ENCODE measurements at regions of chr3 and their contacts with region 1.

Region 1: DNA sequence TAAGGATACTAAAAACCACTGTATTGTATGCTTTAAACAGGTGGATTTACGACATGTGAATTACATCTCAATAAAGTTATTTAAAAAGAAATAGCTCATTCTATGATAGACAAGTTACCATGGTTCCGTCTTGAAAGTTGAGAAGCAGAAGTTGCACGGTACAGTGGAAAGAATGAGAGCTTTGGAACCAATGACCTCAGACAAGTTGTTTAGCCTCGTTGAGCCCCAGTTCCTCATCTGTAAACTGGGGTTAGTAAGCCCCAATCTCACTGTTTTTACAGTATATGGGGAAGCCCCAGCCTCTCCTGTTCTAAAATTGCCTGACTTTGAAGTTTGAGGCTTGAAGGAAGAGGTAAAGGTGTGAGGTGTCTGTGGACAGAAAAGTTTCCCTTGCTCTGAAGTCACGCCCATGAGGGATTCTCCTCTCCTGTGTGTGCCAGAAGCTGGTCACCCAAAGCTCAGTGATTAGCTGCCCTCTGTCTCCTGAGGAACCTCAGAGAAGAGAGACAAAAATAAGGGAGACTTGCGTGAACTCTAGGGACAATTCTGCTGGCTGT is 10.0 kb downstream of the CRYGS start:
- DNase-seq: peak; percentile 14
- H3K4me3 Mint-ChIP-seq: peak overlapping the region; percentile 57
- H3K27ac Mint-ChIP-seq: peak overlapping the region; percentile 90
- H3K4me1 Mint-ChIP-seq: peaks cover 42% of the 10 kb centered on the region
- H3K27me3 Mint-ChIP-seq: no peaks in the 10 kb centered on the region

Region 2: GRCh38 chr3:186259612-186260383 is 274.4 kb before region 1 on chr3:
- intact Hi-C with region 1: loop called (anchors 1 kb)
- DNase-seq: peak; percentile 27
- H3K4me3 Mint-ChIP-seq: peak overlapping the region; percentile 3
- H3K27ac Mint-ChIP-seq: peak overlapping the region; percentile 40
- H3K4me1 Mint-ChIP-seq: peaks cover 20% of the 10 kb centered on the region
- H3K27me3 Mint-ChIP-seq: peaks cover 5% of the 10 kb centered on the region

Region 3: DNA sequence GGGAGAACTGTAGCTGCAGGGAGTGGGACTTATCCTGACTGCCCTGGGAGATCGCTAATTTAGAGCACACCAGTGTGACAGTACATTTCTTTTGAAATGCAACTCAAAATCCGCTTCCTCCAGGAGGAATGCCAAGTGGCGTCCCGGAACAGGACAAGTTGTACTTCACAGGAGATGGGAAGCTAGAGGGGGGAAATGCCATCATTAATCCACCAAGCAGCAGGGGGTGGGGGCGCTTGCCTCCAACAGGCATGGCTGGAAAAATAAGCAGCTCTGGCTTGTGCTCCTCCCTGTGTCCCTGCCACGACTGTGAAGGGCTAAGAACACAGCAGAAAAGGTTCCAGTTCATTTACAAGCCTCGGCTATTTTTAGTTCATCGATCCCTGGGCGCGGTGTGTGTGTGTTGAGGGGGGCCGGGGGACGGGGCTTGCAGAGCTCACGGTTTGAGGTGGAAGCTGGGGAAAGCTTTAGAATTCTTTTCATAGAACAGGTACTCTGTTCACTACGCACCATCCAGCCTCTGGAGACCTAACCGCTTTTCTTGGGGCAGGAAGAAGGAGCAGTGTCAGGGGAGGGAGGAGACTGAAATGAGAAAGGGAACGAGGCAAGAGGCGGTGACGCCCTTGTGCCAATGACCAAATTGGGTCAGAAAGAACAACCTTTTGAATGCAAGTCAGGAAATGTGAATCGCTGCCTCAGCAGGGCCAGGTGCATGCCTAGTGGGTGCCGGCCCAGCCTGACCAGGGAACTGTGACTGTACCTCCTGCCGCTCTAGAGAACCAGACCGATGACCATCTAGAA is 120.4 kb before region 1 on chr3:
- intact Hi-C with region 1: loop called (anchors 10 kb)
- DNase-seq: no peak
- H3K4me3 Mint-ChIP-seq: peak overlapping the region; percentile 35
- H3K27ac Mint-ChIP-seq: no peak overlapping the region
- H3K4me1 Mint-ChIP-seq: peaks cover 12% of the 10 kb centered on the region
- H3K27me3 Mint-ChIP-seq: peaks cover 15% of the 10 kb centered on the region

Region 4: DNA sequence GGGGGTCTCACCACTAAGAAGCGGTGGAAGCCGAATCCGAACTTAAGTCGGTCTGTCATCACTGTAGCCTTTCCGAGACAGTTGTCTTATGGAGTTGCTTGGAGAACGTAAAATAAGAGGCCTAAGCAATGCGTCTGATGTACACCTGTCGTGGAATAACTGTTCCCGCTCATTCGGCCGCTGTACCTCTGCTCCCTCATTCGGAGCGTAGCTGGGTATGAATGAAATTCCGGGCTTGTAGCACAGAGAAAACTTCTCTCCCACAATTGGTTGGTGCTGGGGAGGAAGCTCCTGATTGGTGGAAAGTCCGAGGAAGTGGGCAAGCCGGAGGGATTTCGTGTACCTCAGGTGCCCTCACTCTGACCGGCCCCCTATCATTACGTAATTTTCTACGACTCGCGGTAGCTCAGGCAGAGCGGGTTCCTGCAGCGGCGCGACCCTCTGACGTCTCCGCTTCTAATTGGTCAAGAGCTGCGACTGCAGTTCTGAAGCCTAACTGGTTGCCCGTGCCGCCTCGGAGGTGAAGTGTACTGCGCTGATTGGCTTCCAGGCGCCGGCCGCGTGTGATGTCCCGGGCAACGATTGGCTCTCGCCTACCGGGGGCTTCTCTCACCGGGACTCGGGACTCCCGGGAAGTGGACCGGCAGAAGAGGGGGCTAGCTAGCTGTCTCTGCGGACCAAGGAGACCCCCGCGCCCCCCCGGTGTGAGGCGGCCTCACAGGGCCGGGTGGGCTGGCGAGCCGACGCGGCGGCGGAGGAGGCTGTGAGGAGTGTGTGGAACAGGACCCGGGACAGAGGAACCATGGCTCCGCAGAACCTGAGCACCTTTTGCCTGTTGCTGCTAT is 36.1 kb after region 1 on chr3 and contains the start of gene DNAJB11:
- intact Hi-C with region 1: loop called (anchors 2 kb)
- DNase-seq: peak; percentile 98
- H3K4me3 Mint-ChIP-seq: peak within 1 kb of the TSS; percentile 89
- H3K27ac Mint-ChIP-seq: peak within 1 kb of the TSS; percentile 98
- H3K4me1 Mint-ChIP-seq: peaks cover 42% of the 10 kb centered on the region
- H3K27me3 Mint-ChIP-seq: no peaks in the 10 kb centered on the region
- total RNA-seq, gene DNAJB11: 66.3 and 72.8 TPM in 2 replicates

Region 5: GRCh38 chr3:186617038-186617946 is 83.1 kb after region 1 on chr3:
- intact Hi-C with region 1: loop called (anchors 10 kb)
- DNase-seq: peak; percentile 77
- H3K4me3 Mint-ChIP-seq: peak overlapping the region; percentile 61
- H3K27ac Mint-ChIP-seq: peak overlapping the region; percentile 50
- H3K4me1 Mint-ChIP-seq: peaks cover 13% of the 10 kb centered on the region
- H3K27me3 Mint-ChIP-seq: peaks cover 43% of the 10 kb centered on the region